Activated CD4-positive, alpha-beta memory T cell treated with anti-CD3 and anti-CD28 coated beads for 36 hours (primary cell): ENCODE measurements at regions of chr1 and their contacts with region 1.

Region 1: GRCh38 chr1:53238197-53239155 is at the start of gene MAGOH:
- DNase-seq: peak; percentile 97
- H3K4me3 Mint-ChIP-seq: peak within 1 kb of the TSS; percentile 97
- H3K27ac Mint-ChIP-seq: peak within 1 kb of the TSS; percentile 85
- H3K4me1 Mint-ChIP-seq: peaks cover 26% of the 10 kb centered on the region
- H3K27me3 Mint-ChIP-seq: no peaks in the 10 kb centered on the region
- total RNA-seq, gene MAGOH: 85.7 to 89.5 TPM

Region 2: GRCh38 chr1:53220171-53220961 is 18.1 kb before region 1 on chr1 and contains the start of gene CZIB:
- CTCF ChIA-PET with region 1: no interaction called
- POLR2A ChIA-PET with region 1: interaction called, 4 read pairs
- intact Hi-C with region 1: loop called (anchors 1 kb)
- DNase-seq: peak; percentile 97
- H3K4me3 Mint-ChIP-seq: peak within 1 kb of the TSS; percentile 89
- H3K27ac Mint-ChIP-seq: peak within 1 kb of the TSS; percentile 95
- H3K4me1 Mint-ChIP-seq: peaks cover 21% of the 10 kb centered on the region
- H3K27me3 Mint-ChIP-seq: no peaks in the 10 kb centered on the region
- total RNA-seq, gene CZIB: 34.0 to 37.4 TPM

Region 3: DNA sequence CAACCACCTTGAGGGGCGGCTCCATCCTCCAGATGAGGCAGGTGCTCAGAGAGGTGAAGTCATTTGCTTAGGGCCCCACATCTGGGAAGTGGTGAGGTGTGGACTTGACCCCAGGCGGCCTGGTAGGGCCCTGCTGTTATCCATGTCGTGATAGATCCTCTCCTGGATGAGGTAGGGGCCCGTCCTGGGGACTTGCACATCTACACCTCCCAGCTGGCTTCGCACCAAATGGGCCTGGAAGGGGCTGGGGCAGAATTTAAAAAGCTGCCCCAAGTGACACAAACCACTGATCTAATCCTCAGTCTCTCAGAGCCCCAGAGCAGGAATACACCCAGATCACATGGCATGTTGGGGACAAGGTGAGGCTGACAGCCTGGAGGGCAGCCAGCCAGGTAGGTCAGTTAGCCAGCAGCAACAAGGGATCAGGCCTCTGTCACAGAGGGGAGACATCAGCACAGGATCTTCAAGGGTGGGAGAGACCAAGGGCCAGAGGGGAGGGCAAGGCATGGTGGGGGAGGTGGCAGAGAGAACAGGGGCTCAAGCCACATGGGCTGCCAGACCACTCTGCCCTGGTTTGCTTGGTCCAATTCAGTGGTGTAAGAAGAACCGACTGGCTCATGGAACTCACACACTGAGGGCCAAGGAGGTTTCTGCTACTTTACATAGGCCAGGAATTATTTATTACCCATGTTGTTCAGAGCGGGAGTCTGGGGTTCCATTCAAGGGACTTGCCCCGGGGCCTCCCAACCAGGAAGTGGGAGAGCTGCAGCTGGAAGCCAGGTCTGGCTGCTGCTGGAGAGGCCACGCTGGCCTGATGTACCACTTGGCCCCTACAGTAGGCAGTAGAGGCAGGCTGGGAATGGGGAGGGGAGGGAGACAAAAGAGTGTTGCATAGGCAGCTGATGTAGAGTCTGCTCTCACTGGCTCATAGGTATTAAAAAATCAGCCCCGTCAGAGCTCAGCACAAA is 77.3 kb after region 1 on chr1:
- CTCF ChIA-PET with region 1: no interaction called
- POLR2A ChIA-PET with region 1: no interaction called
- intact Hi-C with region 1: no loop called
- DNase-seq: no peak
- H3K4me3 Mint-ChIP-seq: no peak overlapping the region
- H3K27ac Mint-ChIP-seq: no peak overlapping the region
- H3K4me1 Mint-ChIP-seq: no peaks in the 10 kb centered on the region
- H3K27me3 Mint-ChIP-seq: no peaks in the 10 kb centered on the region